ENCODE measurements at regions of chr20 and their contacts with region 1.

Region 1: GRCh38 chr20:39042279-39043150 is 80.4 kb downstream of the DHX35 start:
- DNase-seq: no peak
- ATAC-seq: no peak

Region 2: DNA sequence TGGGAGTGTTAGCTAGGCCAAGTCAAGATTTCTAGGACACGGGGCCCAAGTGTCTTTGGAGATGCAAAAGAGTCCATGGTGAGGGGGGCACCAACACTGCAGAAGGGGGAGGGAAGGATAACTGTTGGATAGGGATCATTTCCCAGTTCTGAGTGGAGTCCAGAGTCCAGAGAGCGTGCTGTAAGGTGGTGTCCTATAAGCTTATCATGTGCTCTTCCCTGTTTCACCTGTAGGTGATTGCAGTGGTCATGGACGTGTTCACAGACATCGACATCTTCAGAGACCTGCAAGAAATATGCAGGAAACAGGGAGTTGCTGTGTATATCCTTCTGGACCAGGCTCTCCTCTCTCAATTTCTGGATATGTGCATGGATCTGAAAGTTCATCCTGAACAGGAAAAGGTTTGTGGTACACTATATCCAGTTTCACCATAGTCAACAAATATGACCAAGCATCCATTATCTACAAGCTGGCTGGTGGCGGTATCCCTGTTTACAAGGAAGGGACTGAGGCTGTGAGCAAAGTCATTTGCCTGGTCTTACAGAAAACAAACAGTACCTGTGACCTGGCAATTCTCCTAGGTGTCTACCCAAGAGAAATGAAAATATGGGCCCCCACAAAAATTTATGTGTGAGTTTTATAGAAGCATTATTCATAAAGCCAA is 100.7 kb before region 1 on chr20:
- intact Hi-C with region 1: loop called in 1 of 2 experiments (anchors 5 kb)
- DNase-seq: no peak
- ATAC-seq: no peak

Measured in left cardiac atrium (tissue), 4 donors.